Ascending aorta (tissue), 2 donors: ENCODE measurements at regions of chrX and their contacts with region 1.

Region 1: DNA sequence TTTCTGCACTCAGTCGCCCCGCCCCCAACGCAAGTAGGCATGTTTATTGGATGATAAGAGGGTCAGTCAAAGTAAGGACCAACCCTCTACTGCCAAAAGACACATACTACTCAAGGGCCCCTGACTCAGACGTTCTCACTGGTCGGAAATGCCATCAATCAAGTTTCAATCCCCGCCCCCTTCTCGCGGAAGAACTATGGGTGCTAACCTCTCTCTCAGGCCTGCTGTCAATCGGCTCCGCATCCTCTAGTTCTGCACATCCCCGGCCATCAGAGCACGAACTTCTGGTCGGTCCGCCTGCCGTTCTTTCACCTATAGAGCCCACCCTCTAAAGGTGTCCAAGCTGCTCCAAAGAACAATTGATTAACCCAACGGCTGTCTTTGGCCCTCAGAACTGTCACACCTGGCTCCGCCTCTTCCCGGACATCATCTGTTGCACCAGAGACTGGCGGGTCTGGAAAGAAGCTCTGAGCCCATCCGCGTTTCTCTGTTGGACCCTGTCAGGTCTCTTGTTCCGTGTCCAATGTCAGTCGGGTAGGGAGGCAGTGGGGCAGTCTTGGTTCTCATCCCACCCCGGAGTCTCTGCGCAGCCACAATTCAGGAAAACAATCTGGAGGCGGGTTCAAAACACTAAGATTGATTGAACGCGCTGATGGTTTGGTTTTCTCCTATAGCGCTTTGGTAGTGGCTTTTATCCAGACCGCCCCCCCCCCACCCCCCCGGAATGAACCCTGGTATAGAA is 15.2 kb downstream of the NDUFB11 start:
- DNase-seq: peak; percentile 84 to 95
- H3K4me3 ChIP-seq: peak overlapping the region; percentile 52 to 68
- H3K27ac ChIP-seq: peak overlapping the region; percentile 55 to 72
- H3K4me1 ChIP-seq: no peaks in the 10 kb centered on the region
- H3K27me3 ChIP-seq: no peaks in the 10 kb centered on the region
- CTCF ChIP-seq: no peak

Region 2: DNA sequence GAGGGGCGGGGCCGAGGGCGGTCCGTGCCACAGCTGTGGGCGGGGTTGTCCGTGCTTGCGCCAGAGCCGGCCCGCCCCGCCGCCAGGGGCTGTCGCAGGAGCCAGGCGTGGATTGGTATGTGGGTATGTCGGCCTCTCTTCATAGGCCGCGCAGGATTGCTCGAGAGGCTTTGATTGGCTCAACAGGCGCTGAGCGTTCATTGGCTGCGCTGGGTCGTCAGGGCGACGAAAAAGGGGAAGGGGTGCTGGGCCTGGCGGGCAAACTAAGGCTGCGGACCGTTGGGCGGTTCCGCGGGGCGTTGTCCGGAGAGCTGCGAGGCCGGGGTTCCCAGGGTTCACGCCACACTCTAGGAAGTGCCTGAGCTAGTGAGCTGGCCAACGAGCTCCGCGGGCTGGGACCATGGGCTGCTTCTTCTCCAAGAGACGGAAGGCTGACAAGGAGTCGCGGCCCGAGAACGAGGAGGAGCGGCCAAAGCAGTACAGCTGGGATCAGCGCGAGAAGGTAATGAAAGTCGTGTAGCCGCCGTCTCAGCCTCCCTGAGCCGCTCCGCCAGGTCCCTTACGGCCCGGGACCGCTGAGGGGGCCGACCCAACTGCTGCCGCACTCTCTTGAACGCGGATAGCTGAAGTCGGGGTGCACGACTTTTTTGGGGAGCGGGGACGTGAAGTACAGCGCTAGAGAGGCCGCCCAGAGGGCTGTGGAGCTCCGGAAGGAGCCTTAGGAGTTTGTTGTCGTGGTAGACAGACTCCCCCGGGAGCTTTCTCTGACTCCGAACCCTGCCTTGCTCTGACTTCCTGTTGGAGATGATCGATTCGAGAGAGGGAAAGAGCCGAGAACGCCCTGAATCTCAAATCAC is 292.4 kb before region 1 on chrX and contains the start of gene RP2:
- intact Hi-C with region 1: loop called (anchors 5 kb)
- DNase-seq: peak; percentile 86 to 96
- H3K4me3 ChIP-seq: peak within 1 kb of the TSS; percentile 69 to 75
- H3K27ac ChIP-seq: peak within 1 kb of the TSS; percentile 79 to 88
- H3K4me1 ChIP-seq: peaks cover 0 to 8% of the 10 kb centered on the region in 2 donors
- H3K27me3 ChIP-seq: no peaks in the 10 kb centered on the region
- CTCF ChIP-seq: no peak
- total RNA-seq, gene RP2: 6.6 TPM

Region 3: DNA sequence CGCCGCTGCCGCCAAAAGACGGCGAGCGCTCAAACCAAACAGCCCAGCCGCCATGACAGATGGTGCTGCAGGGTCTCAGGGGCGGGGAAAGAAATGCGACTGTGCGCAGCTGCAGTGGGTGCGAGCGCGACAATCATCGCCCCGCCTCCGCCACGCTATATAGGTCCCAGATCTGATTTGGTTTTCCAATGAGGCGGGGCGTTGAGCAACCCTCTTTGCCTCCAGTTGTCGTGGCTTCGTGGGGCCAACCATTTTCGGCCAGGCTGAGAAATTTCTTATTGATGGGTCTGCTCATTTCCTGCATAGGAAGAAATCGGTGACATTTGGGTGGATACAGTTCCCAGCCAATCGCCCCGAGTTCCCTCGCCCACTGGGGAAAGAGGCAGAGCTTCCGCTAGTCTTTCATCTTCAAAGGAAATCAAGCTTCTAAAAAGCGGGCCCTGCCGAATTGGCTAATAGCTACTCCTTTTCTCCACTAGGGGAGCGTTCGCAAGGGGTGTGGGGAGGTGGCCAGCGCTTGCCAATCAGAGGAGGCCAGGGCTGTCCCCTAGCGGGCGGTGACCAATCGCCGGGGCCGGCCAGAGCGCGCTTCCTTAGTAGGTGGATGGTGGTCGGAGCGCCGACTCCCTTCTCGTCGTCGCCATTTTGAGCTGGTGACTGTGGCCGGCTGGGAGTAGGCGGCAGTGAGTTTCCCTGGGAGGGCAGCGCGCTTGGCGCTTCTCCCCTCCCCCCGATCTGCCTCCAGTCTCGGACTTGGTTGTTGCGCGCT is 15.5 kb after region 1 on chrX and contains the starts of genes NDUFB11 and RBM10:
- intact Hi-C with region 1: loop called (anchors 1 kb)
- DNase-seq: peak; percentile 80 to 97
- H3K4me3 ChIP-seq: peak within 1 kb of the TSS; percentile 64 to 66
- H3K27ac ChIP-seq: peak within 1 kb of the TSS; percentile 86 to 95
- H3K4me1 ChIP-seq: no peaks in the 10 kb centered on the region
- H3K27me3 ChIP-seq: no peaks in the 10 kb centered on the region
- CTCF ChIP-seq: peak; percentile 57 to 83 (median 66)
- total RNA-seq, gene NDUFB11: 122 TPM
- total RNA-seq, gene RBM10: 52.4 TPM

Region 4: DNA sequence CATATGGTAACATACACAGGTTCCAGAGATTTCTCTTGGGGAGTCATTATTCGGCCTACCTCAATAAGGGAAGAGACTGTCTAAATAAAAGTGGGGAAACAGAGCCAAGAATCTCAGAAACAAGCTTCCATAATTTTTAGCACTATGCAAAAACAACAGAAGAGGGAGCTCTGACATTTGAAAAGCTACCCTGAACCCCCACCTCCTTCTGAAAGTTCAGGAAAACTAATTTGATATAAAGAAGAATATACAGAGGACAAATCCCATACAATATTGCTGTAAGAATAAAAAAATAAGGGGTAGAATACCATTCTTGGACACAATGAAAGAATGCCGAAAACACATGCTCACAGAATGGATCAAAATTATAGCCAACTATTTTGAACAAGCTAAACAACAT is 367.9 kb after region 1 on chrX:
- intact Hi-C with region 1: no loop called
- DNase-seq: no peak
- H3K4me3 ChIP-seq: no peak overlapping the region
- H3K27ac ChIP-seq: no peak overlapping the region
- H3K4me1 ChIP-seq: no peaks in the 10 kb centered on the region
- H3K27me3 ChIP-seq: no peaks in the 10 kb centered on the region
- CTCF ChIP-seq: peak in 1 of 3 experiments; percentile 29